HEK293 (cell line): ENCODE measurements at regions of chr1 and their contacts with region 1.

Region 1: DNA sequence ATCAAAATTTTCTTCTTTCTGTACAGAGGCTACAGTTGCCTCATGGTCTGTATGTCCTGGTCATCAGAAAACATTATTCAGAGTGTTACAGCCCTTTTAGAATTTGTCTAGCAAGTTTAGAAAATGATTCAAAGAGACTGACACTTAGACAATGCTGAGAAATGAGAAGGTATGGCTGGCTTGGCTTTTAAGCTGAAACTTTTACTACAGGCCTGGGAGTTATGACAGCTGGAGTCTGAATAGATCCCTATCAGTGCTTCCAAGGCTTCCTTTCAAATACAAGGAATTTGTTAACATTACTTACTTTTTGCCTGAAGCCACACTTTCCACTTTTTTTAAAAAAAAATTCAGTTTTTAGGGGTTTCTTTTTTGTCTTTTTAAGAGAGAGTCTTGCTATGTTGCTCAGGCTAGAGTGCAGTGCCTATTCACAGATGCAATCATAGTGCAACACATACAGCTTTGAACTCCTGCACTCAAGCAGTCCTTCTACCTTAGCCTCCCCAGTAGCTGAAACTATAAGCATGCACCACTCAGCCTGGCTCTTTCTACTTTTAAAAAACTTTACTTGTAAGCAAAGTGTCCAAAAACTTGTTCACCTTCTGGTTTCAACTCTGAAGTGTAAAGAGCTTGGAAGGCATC is 10.5 kb upstream of the COP1 start:
- H3K4me3 ChIP-seq: no peak overlapping the region
- H3K27ac ChIP-seq: no peak overlapping the region
- H3K4me1 ChIP-seq: no peaks in the 10 kb centered on the region
- CTCF ChIP-seq: no peak

Region 2: GRCh38 chr1:176206961-176207902 is 10.3 kb before region 1 on chr1 and contains the start of gene COP1:
- CTCF ChIA-PET with region 1: no interaction called
- POLR2A ChIA-PET with region 1: interaction called, 11 read pairs
- H3K4me3 ChIP-seq: peak within 1 kb of the TSS; percentile 83
- H3K27ac ChIP-seq: peak within 1 kb of the TSS; percentile 89
- H3K4me1 ChIP-seq: peaks cover 6% of the 10 kb centered on the region
- CTCF ChIP-seq: peak; percentile 46; the same call in 1 of the 2 replicates

Region 3: GRCh38 chr1:176450523-176450922 is 232.9 kb after region 1 on chr1:
- CTCF ChIA-PET with region 1: no interaction called
- POLR2A ChIA-PET with region 1: no interaction called
- H3K4me3 ChIP-seq: no peak overlapping the region
- H3K27ac ChIP-seq: no peak overlapping the region
- H3K4me1 ChIP-seq: no peaks in the 10 kb centered on the region
- CTCF ChIP-seq: no peak